Activated CD4-positive, alpha-beta T cell treated with anti-CD3 and anti-CD28 coated beads for 36 hours (primary cell): ENCODE measurements at regions of chr2 and their contacts with region 1.

Region 1: GRCh38 chr2:120174963-120175581 is 48.1 kb downstream of the TMEM185B start:
- DNase-seq: no peak
- ATAC-seq: no peak
- H3K4me3 Mint-ChIP-seq: no peak overlapping the region
- H3K27ac Mint-ChIP-seq: peak overlapping the region; percentile 61
- H3K4me1 Mint-ChIP-seq: peaks cover 44% of the 10 kb centered on the region
- H3K27me3 Mint-ChIP-seq: no peaks in the 10 kb centered on the region

Region 2: DNA sequence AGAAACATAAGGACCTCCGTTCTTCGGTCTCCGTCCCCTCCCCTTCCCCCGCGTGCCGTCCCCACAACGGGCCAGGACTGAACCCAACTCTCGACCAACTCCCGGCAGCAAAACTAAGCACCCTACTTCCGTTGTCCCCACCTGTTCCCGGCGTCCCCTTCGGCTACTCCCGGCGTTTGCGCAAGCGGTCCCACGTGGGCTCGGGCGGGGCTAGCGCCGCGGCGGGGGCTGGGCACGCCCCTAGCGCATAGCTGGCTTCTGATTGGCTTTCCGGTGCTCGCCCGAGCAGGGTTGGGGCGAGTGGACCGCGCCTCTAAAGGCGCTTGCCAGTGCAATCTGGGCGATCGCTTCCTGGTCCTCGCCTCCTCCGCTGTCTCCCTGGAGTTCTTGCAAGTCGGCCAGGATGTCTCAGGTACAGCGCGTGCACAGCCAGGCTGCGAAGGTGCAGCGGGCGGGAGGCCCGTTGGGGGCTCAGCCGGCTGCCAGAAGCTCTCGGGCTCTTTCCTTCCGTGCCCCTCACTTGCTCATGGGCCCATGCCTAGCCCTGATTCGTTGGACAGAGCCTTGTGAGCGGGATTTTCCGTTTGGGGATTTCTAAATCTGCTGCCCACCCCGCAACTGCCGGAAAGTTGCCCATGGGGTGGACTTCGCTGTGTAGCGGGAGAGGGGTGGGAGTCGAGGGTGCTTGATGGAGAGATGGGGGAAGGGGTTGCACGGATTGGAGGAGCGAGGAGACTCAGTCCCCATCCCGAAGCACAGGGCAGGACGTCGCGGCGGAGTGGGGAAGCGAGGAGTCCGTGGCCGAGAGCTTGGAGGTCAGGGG is 808.2 kb before region 1 on chr2 and contains the starts of genes C2orf76 and DBI:
- CTCF ChIA-PET with region 1: no interaction called
- POLR2A ChIA-PET with region 1: no interaction called
- intact Hi-C with region 1: loop called (anchors 2 to 5 kb)
- DNase-seq: peak; percentile 96
- ATAC-seq: peak; percentile 95
- H3K4me3 Mint-ChIP-seq: peak within 1 kb of the TSS; percentile 92
- H3K27ac Mint-ChIP-seq: peak within 1 kb of the TSS; percentile 95
- H3K4me1 Mint-ChIP-seq: peaks cover 36% of the 10 kb centered on the region
- H3K27me3 Mint-ChIP-seq: no peaks in the 10 kb centered on the region
- total RNA-seq, gene C2orf76: 8.9 to 9.9 TPM
- total RNA-seq, gene DBI: 123 to 151 TPM

Region 3: GRCh38 chr2:119702918-119703401 is 472.1 kb before region 1 on chr2:
- CTCF ChIA-PET with region 1: interaction called, 36 read pairs
- POLR2A ChIA-PET with region 1: no interaction called
- intact Hi-C with region 1: loop called (anchors 1 kb)
- DNase-seq: peak; percentile 82
- ATAC-seq: peak; percentile 81
- H3K4me3 Mint-ChIP-seq: no peak overlapping the region
- H3K27ac Mint-ChIP-seq: no peak overlapping the region
- H3K4me1 Mint-ChIP-seq: peaks cover 21% of the 10 kb centered on the region
- H3K27me3 Mint-ChIP-seq: no peaks in the 10 kb centered on the region

Region 4: GRCh38 chr2:119826370-119826961 is 348.6 kb before region 1 on chr2:
- CTCF ChIA-PET with region 1: interaction called, 3 read pairs
- POLR2A ChIA-PET with region 1: no interaction called
- intact Hi-C with region 1: loop called (anchors 2 to 5 kb)
- DNase-seq: peak; percentile 57
- ATAC-seq: peak; percentile 54
- H3K4me3 Mint-ChIP-seq: no peak overlapping the region
- H3K27ac Mint-ChIP-seq: no peak overlapping the region
- H3K4me1 Mint-ChIP-seq: peaks cover 37% of the 10 kb centered on the region
- H3K27me3 Mint-ChIP-seq: no peaks in the 10 kb centered on the region

Region 5: GRCh38 chr2:120109186-120110061 is 65.6 kb before region 1 on chr2:
- CTCF ChIA-PET with region 1: interaction called, 82 read pairs
- POLR2A ChIA-PET with region 1: no interaction called
- intact Hi-C with region 1: loop called (anchors 1 kb)
- DNase-seq: no peak
- ATAC-seq: peak; percentile 78
- H3K4me3 Mint-ChIP-seq: peak overlapping the region; percentile 3
- H3K27ac Mint-ChIP-seq: peak overlapping the region; percentile 88
- H3K4me1 Mint-ChIP-seq: peaks cover 28% of the 10 kb centered on the region
- H3K27me3 Mint-ChIP-seq: no peaks in the 10 kb centered on the region

Region 6: GRCh38 chr2:120223034-120223912 is 48.2 kb after region 1 on chr2 and contains the start of gene TMEM185B:
- CTCF ChIA-PET with region 1: interaction called, 14 read pairs
- POLR2A ChIA-PET with region 1: interaction called, 4 read pairs
- intact Hi-C with region 1: loop called (anchors 1 kb)
- DNase-seq: peak; percentile 95
- ATAC-seq: peak; percentile 90
- H3K4me3 Mint-ChIP-seq: peak within 1 kb of the TSS; percentile 76
- H3K27ac Mint-ChIP-seq: peak within 1 kb of the TSS; percentile 93
- H3K4me1 Mint-ChIP-seq: peaks cover 50% of the 10 kb centered on the region
- H3K27me3 Mint-ChIP-seq: no peaks in the 10 kb centered on the region
- total RNA-seq, gene TMEM185B: 15.9 to 17.3 TPM

Region 7: GRCh38 chr2:120287183-120288015 is 112.3 kb after region 1 on chr2:
- CTCF ChIA-PET with region 1: interaction called, 4 read pairs
- POLR2A ChIA-PET with region 1: no interaction called
- intact Hi-C with region 1: loop called in 1 of 2 experiments (anchors 2 kb)
- DNase-seq: peak; percentile 63
- ATAC-seq: peak; percentile 97
- H3K4me3 Mint-ChIP-seq: no peak overlapping the region
- H3K27ac Mint-ChIP-seq: peak overlapping the region; percentile 79
- H3K4me1 Mint-ChIP-seq: peaks cover 29% of the 10 kb centered on the region
- H3K27me3 Mint-ChIP-seq: no peaks in the 10 kb centered on the region